ENCODE measurements at regions of chr9 and their contacts with region 1.

Region 1: DNA sequence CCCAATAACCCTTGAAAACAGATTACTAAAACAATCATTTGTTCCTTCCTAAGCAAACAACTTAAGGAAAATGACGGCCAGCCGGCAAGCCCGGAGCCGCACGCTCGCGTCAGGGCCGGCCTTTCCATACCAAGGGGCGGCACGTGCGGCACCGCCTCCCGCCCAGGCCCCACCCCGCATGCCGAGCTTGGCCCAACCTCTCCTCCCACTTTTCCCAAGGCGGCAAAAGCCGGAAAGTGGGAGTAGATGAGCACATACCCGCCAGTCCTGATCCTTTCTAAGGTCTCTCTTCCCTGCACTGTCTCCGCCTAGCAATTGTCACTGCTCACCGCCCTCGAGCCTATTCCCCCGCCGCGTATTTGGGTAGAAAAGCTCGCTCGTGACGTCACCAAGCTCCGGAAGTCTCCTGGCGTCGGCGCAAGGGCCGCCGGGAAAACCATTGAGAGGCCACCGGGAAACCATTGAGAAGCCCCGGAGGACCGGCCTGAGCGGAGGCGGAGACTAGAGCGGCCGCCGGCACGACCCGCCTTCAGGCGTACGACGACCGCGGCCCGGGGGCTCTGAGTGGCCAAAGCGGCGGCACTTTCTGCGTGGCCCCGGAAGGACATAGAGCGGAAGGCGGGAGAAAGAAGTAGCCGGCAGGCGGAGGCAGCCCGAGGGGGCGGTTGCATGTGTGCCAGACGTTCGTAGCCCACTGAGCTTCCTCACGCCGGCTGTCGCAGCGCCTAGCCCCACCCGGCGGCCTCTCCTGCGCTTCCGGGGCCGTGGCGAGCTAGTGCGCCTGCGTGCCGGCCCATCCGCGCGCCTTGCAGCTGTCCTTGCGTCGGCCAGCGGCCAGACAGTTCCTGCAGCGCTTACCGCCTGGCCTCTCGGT is at the starts of genes NCBP1 and TSTD2:
- DNase-seq: peak; percentile 92 to 99 (median 94)
- ATAC-seq: peak; percentile 82
- H3K4me3 ChIP-seq: peak within 1 kb of the TSS; percentile 72
- H3K4me3 Mint-ChIP-seq: peak within 1 kb of the TSS; percentile 97
- H3K27ac ChIP-seq: peak within 1 kb of the TSS; percentile 95 to 97
- H3K27ac Mint-ChIP-seq: peak within 1 kb of the TSS; percentile 99
- H3K4me1 ChIP-seq: peaks cover 37% of the 10 kb centered on the region
- H3K4me1 Mint-ChIP-seq: peaks cover 73% of the 10 kb centered on the region
- H3K27me3 ChIP-seq: no peaks in the 10 kb centered on the region
- H3K27me3 Mint-ChIP-seq: no peaks in the 10 kb centered on the region
- CTCF ChIP-seq: no peak
- total RNA-seq, gene NCBP1: 50.7 to 53.5 TPM
- total RNA-seq, gene TSTD2: 23.8 to 26.0 TPM

Region 2: GRCh38 chr9:96854073-96854876 is 778.9 kb before region 1 on chr9 and contains the start of gene ZNF782:
- CTCF ChIA-PET with region 1: no interaction called
- POLR2A ChIA-PET with region 1: interaction called, 10 read pairs
- intact Hi-C with region 1: loop called in 1 of 2 experiments (anchors 5 kb)
- DNase-seq: peak; percentile 67 to 93 (median 78)
- ATAC-seq: peak; percentile 88
- H3K4me3 ChIP-seq: peak within 1 kb of the TSS; percentile 87
- H3K4me3 Mint-ChIP-seq: peak within 1 kb of the TSS; percentile 100
- H3K27ac ChIP-seq: peak within 1 kb of the TSS; percentile 26 to 58
- H3K27ac Mint-ChIP-seq: peak within 1 kb of the TSS; percentile 88
- H3K4me1 ChIP-seq: peaks cover 24% of the 10 kb centered on the region
- H3K4me1 Mint-ChIP-seq: peaks cover 58% of the 10 kb centered on the region
- H3K27me3 ChIP-seq: no peaks in the 10 kb centered on the region
- H3K27me3 Mint-ChIP-seq: no peaks in the 10 kb centered on the region
- CTCF ChIP-seq: no peak
- total RNA-seq, gene ZNF782: 4.3 to 4.9 TPM

Region 3: DNA sequence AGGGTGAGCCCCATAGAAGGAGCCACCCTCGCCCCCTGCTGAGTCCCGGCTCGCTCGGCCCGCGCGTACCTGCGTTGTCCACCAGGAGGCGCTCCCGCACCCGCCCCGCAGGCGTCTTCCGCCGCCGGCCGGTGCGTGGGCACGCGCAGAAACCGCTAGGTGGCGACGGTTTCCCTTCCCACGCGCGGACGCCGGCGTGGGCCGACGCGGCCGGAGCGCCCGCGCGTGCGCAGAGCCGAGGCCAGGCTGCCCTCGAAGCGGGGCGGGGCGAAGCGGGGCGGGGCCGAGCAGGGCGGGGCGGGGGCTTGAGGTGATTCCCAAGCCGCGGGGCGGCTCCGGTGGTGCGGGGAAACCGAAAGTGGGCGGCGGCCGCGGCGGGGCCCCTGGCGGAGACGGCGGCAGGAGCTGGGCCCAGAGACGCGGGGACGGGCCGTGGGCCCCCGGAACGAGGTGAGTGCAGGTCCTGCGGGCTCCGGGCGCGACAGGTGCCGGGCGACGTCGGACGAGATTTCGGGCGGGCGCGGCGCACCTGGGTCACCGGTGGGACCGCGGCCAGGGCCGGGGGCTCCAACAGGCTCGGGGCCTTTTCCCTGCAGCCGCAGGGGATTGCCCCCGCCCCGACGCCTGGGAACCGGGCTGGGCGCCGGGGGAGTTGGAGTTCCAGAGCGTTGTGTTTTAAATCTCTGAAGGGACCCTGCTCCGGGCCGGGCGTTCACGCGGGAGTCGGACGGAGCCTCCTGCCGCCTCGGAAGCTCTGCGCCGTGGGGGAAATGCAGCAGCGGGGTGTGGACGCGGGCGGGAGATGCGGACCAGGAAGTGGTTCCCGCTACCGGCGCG is 221.2 kb before region 1 on chr9 and contains the start of gene TDRD7:
- CTCF ChIA-PET with region 1: interaction called, 3 read pairs
- POLR2A ChIA-PET with region 1: interaction called, 15 read pairs
- intact Hi-C with region 1: no loop called
- DNase-seq: peak; percentile 81 to 98 (median 92)
- ATAC-seq: peak; percentile 88
- H3K4me3 ChIP-seq: peak within 1 kb of the TSS; percentile 79
- H3K4me3 Mint-ChIP-seq: peak within 1 kb of the TSS; percentile 90
- H3K27ac ChIP-seq: peak within 1 kb of the TSS; percentile 41 to 52
- H3K27ac Mint-ChIP-seq: peak within 1 kb of the TSS; percentile 82
- H3K4me1 ChIP-seq: peaks cover 12% of the 10 kb centered on the region
- H3K4me1 Mint-ChIP-seq: peaks cover 40% of the 10 kb centered on the region
- H3K27me3 ChIP-seq: peaks cover 0 to 5% of the 10 kb centered on the region in 2 experiments
- H3K27me3 Mint-ChIP-seq: peaks cover 20% of the 10 kb centered on the region
- CTCF ChIP-seq: peak; percentile 97
- total RNA-seq, gene TDRD7: 3.3 to 3.6 TPM

Region 4: DNA sequence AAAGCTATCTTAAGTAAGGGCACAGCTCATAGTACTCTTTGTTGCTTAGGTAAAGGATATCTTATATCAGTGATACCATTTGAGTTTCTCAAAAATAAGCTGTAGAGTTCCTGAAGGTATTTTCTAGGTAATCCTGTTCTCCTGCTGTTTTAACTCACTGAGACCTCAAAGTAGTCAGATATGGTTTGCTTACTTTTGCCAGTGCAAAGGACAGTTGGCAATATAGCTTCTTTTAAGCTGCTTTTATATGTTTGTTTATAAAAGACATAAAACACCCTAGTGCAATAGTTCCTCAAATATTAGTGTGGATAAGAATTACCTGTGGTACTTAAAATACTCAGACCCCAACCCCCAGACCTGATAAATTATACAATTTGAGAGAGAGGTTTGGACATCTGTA is 12.5 kb after region 1 on chr9:
- CTCF ChIA-PET with region 1: interaction called, 5 read pairs
- POLR2A ChIA-PET with region 1: interaction called, 19 read pairs
- intact Hi-C with region 1: no loop called
- DNase-seq: no peak
- ATAC-seq: no peak
- H3K4me3 ChIP-seq: no peak overlapping the region
- H3K4me3 Mint-ChIP-seq: no peak overlapping the region
- H3K27ac ChIP-seq: no peak overlapping the region
- H3K27ac Mint-ChIP-seq: no peak overlapping the region
- H3K4me1 ChIP-seq: no peaks in the 10 kb centered on the region
- H3K4me1 Mint-ChIP-seq: peaks cover 12% of the 10 kb centered on the region
- H3K27me3 ChIP-seq: no peaks in the 10 kb centered on the region
- H3K27me3 Mint-ChIP-seq: no peaks in the 10 kb centered on the region
- CTCF ChIP-seq: no peak

Region 5: DNA sequence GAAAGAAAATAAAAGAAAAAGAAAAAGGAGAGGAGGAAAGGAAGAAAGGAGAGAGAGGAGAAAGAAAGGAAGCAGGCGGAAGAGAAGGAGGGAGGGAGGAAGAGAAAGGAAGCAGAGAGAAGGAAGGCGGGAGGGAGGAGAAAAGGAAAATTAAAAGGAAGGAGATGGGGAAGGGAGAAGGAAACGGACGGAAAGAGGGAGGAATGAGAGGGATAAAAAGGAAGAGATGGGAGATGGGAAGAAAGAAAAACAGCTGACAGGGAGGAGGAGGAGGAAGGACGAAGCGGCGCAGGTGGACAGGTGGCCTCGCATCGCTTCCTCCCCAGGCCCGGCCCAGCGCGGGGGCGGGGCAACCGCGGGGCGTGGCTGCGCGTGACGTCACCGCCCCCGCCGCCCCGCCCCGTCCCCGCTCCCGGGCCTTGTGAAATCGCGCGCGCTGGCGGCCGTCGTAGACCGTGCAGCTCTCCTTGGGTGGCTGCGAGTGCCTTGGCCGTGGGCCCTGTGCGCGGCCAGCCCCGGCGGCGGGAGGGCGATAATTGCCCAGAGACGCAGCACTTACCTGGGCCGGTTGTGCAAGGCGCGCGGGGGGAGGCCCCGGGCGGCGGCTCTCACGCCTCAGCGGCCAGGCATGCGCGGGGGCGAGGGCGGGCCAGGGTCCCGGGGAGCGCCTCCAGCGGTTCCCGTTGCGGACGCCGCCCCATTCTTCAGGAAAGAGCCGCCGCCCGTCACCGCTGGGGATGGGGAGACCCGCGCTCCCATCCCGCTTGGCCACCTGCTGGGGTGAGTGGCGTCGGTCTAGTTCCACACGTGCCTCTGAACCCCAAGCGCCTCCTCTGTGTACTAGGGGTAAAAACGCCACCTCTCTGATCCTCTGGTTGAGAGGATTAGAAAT is 170.2 kb after region 1 on chr9:
- CTCF ChIA-PET with region 1: no interaction called
- POLR2A ChIA-PET with region 1: no interaction called
- intact Hi-C with region 1: no loop called
- DNase-seq: peak; percentile 60 to 90 (median 72)
- ATAC-seq: peak; percentile 93
- H3K4me3 ChIP-seq: peak overlapping the region; percentile 45
- H3K4me3 Mint-ChIP-seq: peak overlapping the region; percentile 84
- H3K27ac ChIP-seq: no peak overlapping the region
- H3K27ac Mint-ChIP-seq: peak overlapping the region; percentile 69
- H3K4me1 ChIP-seq: peaks cover 14% of the 10 kb centered on the region
- H3K4me1 Mint-ChIP-seq: peaks cover 5% of the 10 kb centered on the region
- H3K27me3 ChIP-seq: peaks cover 4 to 9% of the 10 kb centered on the region in 2 experiments
- H3K27me3 Mint-ChIP-seq: peaks cover 32% of the 10 kb centered on the region
- CTCF ChIP-seq: no peak

Region 6: DNA sequence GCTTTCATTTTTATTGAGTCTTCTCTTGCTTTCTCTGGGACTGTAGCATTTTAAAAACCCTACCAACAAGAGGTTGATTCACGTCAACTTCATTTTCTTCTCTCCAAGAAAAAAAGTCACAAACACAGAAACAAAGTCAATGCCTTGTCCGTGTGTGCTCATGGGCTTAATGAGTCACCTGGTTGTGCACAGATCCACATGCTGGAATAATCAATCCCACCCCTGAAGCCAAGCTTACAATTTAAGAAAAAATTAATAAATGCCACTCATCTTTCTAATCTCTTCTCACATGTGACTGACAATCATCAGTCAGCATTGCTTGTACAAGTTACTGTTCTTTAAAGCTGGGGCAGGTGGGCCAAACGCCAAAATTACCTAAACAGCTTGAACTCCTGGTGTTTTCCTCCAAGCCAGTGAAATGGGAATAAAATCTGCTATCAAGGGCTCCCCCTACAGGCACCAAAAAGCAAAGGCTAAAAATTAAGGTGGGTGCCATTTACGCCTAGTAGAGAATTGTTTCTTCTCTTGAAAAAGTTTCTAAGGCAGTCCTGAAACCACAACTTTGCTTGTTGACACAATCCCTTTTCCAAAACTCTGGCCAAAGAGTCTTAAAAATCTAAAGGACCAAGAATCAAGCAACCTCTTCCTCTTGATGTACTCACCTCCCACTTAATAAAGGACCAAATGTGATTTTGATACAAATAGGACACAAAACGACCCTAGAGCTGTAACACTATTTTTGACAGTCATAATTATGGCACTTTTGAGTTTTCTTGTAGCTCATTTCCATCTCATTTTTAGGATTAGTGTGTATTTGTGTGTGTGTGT is 267.7 kb after region 1 on chr9:
- CTCF ChIA-PET with region 1: no interaction called
- POLR2A ChIA-PET with region 1: interaction called, 10 read pairs
- intact Hi-C with region 1: loop called in 1 of 2 experiments (anchors 10 kb)
- DNase-seq: peak in 4 of 14 experiments; percentile 57 to 79 (median 70)
- ATAC-seq: no peak
- H3K4me3 ChIP-seq: no peak overlapping the region
- H3K4me3 Mint-ChIP-seq: peak overlapping the region; percentile 22
- H3K27ac ChIP-seq: peak overlapping the region in 1 of 2 donors; percentile 7
- H3K27ac Mint-ChIP-seq: peak overlapping the region; percentile 96
- H3K4me1 ChIP-seq: peaks cover 54% of the 10 kb centered on the region
- H3K4me1 Mint-ChIP-seq: peaks cover 71% of the 10 kb centered on the region
- H3K27me3 ChIP-seq: no peaks in the 10 kb centered on the region
- H3K27me3 Mint-ChIP-seq: no peaks in the 10 kb centered on the region
- CTCF ChIP-seq: peak; percentile 81

Region 7: GRCh38 chr9:98807070-98807810 is 1174.0 kb after region 1 on chr9 and contains the start of gene GALNT12:
- CTCF ChIA-PET with region 1: no interaction called
- POLR2A ChIA-PET with region 1: interaction called, 7 read pairs
- intact Hi-C with region 1: loop called in 1 of 2 experiments (anchors 10 kb)
- DNase-seq: peak in 13 of 14 experiments; percentile 26 to 77 (median 54)
- ATAC-seq: peak; percentile 83
- H3K4me3 ChIP-seq: peak within 1 kb of the TSS; percentile 77
- H3K4me3 Mint-ChIP-seq: peak within 1 kb of the TSS; percentile 94
- H3K27ac ChIP-seq: no peak within 1 kb of the TSS
- H3K27ac Mint-ChIP-seq: peak within 1 kb of the TSS; percentile 39
- H3K4me1 ChIP-seq: peaks cover 20% of the 10 kb centered on the region
- H3K4me1 Mint-ChIP-seq: peaks cover 27% of the 10 kb centered on the region
- H3K27me3 ChIP-seq: peaks cover 4 to 5% of the 10 kb centered on the region in 2 experiments
- H3K27me3 Mint-ChIP-seq: peaks cover 8% of the 10 kb centered on the region
- CTCF ChIP-seq: no peak
- total RNA-seq, gene GALNT12: 8.7 to 11.5 TPM

Measured in CD4-positive, alpha-beta T cell (primary cell).